ENCODE measurements at regions of chr2 and their contacts with region 1.

Region 1: GRCh38 chr2:230809677-230810251 is 55.0 kb upstream of the ITM2C start:
- DNase-seq: no peak
- H3K4me3 ChIP-seq: no peak overlapping the region
- H3K27ac ChIP-seq: no peak overlapping the region
- H3K4me1 ChIP-seq: peaks cover 0 to 13% (median under 1%) of the 10 kb centered on the region in 4 donors
- H3K27me3 ChIP-seq: no peaks in the 10 kb centered on the region
- CTCF ChIP-seq: no peak
- EP300 ChIP-seq: no peak
- POLR2A ChIP-seq: no peak

Region 2: GRCh38 chr2:230712443-230713330 is 97.1 kb before region 1 on chr2 and contains the start of gene CAB39:
- intact Hi-C with region 1: loop called (anchors 10 kb)
- DNase-seq: peak; percentile 90 to 97
- H3K4me3 ChIP-seq: peak within 1 kb of the TSS; percentile 74 to 99 (median 92)
- H3K27ac ChIP-seq: peak within 1 kb of the TSS; percentile 96 to 100 (median 98)
- H3K4me1 ChIP-seq: peaks cover 22 to 49% (median 37%) of the 10 kb centered on the region in 4 donors
- H3K27me3 ChIP-seq: no peaks in the 10 kb centered on the region
- CTCF ChIP-seq: peak in 5 of 7 experiments; percentile 32 to 91 (median 84)
- EP300 ChIP-seq: no peak
- POLR2A ChIP-seq: no peak
- total RNA-seq, gene CAB39: 83.9 to 126 (median 86.9) TPM

Region 3: GRCh38 chr2:231425811-231426728 is 616.3 kb after region 1 on chr2:
- intact Hi-C with region 1: no loop called
- DNase-seq: peak in 1 of 2 donors; percentile 26
- H3K4me3 ChIP-seq: no peak overlapping the region
- H3K27ac ChIP-seq: no peak overlapping the region
- H3K4me1 ChIP-seq: no peaks in the 10 kb centered on the region
- H3K27me3 ChIP-seq: no peaks in the 10 kb centered on the region
- CTCF ChIP-seq: no peak
- EP300 ChIP-seq: no peak
- POLR2A ChIP-seq: no peak